Activated CD8-positive, alpha-beta T cell treated with anti-CD3 and anti-CD28 coated beads, Interleukin-2, amount 10 ng/mL, durations not matched to agents 7 days and 5 days (primary cell): ENCODE measurements at regions of chrX and their contacts with region 1.

Region 1: DNA sequence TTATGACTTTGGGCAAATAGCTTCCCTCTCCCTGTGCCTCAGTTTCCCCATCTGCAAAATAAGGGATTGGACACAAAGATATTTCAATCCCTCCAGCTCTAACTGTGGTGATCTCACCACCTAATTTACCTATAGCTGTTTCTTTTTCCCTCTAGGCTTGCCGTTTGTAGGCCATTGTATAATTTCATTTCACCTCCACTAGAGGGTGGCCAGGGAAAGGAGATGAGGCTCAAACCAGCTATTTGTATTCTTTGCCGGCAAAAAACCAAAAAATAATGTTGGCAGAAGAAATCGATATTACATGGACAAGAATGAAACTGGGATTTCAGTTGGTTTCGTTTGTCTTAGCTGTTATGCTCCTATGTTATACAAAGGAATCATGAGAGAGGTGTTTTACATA is 36.1 kb upstream of the DOCK11 start:
- DNase-seq: peak; percentile 27
- ATAC-seq: peak; percentile 71
- H3K4me3 Mint-ChIP-seq: no peak overlapping the region
- H3K27ac Mint-ChIP-seq: no peak overlapping the region
- H3K4me1 Mint-ChIP-seq: no peaks in the 10 kb centered on the region
- H3K27me3 Mint-ChIP-seq: no peaks in the 10 kb centered on the region

Region 2: GRCh38 chrX:118603981-118604380 is 144.5 kb after region 1 on chrX:
- CTCF ChIA-PET with region 1: interaction called, 49 read pairs
- POLR2A ChIA-PET with region 1: no interaction called
- DNase-seq: peak; percentile 34
- ATAC-seq: no peak
- H3K4me3 Mint-ChIP-seq: no peak overlapping the region
- H3K27ac Mint-ChIP-seq: no peak overlapping the region
- H3K4me1 Mint-ChIP-seq: peaks cover 4% of the 10 kb centered on the region
- H3K27me3 Mint-ChIP-seq: no peaks in the 10 kb centered on the region